Ovary (tissue), 10 donors: ENCODE measurements at regions of chr20 and their contacts with region 1.

Region 1: GRCh38 chr20:4014031-4014474 is 1.3 kb downstream of the RNF24 start:
- DNase-seq: peak in 2 of 5 donors; percentile 21 to 42
- H3K4me3 ChIP-seq: no peak overlapping the region
- H3K27ac ChIP-seq: peak overlapping the region in 1 of 2 donors; percentile 30
- H3K4me1 ChIP-seq: peaks cover 2% of the 10 kb centered on the region
- H3K27me3 ChIP-seq: no peaks in the 10 kb centered on the region
- CTCF ChIP-seq: peak in 2 of 3 donors; percentile 27 to 43
- EP300 ChIP-seq: no peak
- POLR2A ChIP-seq: no peak

Region 2: GRCh38 chr20:3888622-3889488 is 125.2 kb before region 1 on chr20 and contains the start of gene PANK2:
- intact Hi-C with region 1: loop called in 1 of 4 experiments (anchors 1 kb)
- DNase-seq: peak; percentile 99 to 100 (median 99)
- H3K4me3 ChIP-seq: peak within 1 kb of the TSS; percentile 93
- H3K27ac ChIP-seq: peak within 1 kb of the TSS; percentile 86 to 92
- H3K4me1 ChIP-seq: peaks cover 13% of the 10 kb centered on the region
- H3K27me3 ChIP-seq: no peaks in the 10 kb centered on the region
- CTCF ChIP-seq: peak; percentile 23 to 54 (median 44)
- EP300 ChIP-seq: no peak
- POLR2A ChIP-seq: peak; percentile 95
- total RNA-seq, gene PANK2: 22.2 to 34.9 (median 33.9) TPM

Region 3: DNA sequence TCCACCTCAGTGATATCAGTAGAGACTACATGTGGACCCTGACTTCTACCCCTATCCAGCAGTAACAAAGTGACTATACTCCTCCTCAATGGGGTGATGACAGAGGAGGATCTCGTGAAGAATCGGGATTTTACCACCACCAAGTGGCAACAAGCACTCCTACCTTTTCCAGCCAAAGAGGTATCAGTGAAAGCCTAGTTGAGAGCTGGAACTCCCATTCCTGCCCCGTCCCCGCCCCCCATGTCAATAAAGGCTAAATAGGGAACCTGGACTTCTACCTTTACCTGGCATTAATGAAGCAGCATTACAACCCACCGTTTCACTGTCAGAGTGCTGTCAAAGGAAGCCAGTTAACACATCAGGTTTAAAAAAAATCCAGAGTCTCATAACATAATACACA is 44.0 kb before region 1 on chr20:
- intact Hi-C with region 1: no loop called
- DNase-seq: no peak
- H3K4me3 ChIP-seq: no peak overlapping the region
- H3K27ac ChIP-seq: no peak overlapping the region
- H3K4me1 ChIP-seq: no peaks in the 10 kb centered on the region
- H3K27me3 ChIP-seq: no peaks in the 10 kb centered on the region
- CTCF ChIP-seq: no peak
- EP300 ChIP-seq: no peak
- POLR2A ChIP-seq: no peak

Region 4: DNA sequence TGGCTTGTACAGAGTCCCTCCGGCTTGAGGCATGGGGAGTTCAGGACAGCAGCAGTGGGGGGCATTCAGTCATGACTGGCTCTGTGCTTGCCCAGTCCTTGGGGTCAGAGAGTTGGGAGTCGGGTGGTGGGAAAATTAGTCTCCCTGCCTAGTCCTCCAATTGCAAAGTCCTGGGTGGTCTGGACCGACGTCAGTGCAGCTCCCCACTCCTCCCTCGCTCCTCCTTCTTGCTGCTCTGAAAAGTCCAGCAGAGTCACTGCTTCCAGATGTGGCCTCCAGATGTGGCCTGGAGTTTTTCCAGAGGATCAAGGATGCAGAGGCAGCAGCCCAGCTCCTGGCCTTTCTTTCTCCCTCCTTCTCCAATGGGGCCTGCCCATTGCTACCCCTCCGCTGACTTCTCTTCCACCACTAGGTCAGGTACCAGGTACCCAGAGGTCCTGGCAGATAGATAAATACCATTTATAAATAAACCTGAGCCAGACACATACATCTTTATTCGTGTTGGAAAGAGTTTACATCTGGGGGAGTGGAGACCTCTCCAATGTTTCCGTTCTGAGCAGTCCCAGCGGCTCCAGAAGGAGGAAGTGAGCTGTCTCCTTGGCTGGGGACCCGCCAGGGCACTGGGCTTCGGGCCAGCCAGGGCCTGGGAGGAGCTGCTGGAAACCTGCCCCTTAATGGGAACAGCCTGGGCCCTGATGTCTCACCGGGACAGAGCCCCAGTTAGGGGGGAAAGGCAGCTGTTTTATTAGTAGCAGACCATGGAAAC is 50.3 kb after region 1 on chr20:
- intact Hi-C with region 1: loop called in 1 of 4 experiments (anchors 10 kb)
- DNase-seq: peak; percentile 91 to 96 (median 94)
- H3K4me3 ChIP-seq: no peak overlapping the region
- H3K27ac ChIP-seq: peak overlapping the region; percentile 7 to 63
- H3K4me1 ChIP-seq: peaks cover 2% of the 10 kb centered on the region
- H3K27me3 ChIP-seq: no peaks in the 10 kb centered on the region
- CTCF ChIP-seq: no peak
- EP300 ChIP-seq: no peak
- POLR2A ChIP-seq: no peak

Region 5: DNA sequence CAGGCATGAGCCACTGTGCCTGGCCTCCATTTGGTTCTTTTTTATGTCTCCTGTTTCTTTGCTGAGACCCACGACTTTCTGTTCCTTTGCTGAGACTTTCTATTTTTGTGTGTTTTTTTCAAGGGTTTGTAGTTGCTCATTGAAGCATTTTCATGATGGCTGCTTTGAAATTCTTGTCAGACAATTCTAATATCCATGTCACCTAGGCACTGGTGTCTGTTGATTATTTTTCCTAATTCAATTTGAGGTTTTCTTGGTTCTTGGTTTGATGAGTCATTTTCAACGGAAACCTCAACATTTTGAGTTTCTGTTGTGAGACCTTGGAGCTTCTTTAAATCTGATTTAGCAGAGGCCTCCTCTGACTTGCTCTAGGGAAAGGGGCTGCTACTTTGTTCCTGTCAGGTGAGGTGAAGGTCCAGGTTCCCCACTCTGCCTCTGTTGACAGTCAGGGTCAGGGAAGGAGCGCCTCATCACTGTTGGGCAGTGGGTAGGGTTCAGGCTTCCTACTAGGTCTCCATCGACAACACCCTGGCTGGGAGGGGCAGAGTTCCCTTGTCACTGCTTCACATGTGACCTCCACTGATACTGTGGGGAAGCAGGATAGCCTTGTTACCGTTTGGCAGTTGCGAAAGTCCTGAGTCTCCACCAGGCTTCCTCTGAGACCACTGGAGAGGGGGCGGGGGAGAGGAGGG is 68.5 kb after region 1 on chr20:
- intact Hi-C with region 1: loop called in 3 of 4 experiments (anchors 5 to 10 kb)
- DNase-seq: peak in 1 of 5 donors; percentile 50
- H3K4me3 ChIP-seq: no peak overlapping the region
- H3K27ac ChIP-seq: no peak overlapping the region
- H3K4me1 ChIP-seq: peaks cover 6% of the 10 kb centered on the region
- H3K27me3 ChIP-seq: no peaks in the 10 kb centered on the region
- CTCF ChIP-seq: no peak
- EP300 ChIP-seq: no peak
- POLR2A ChIP-seq: no peak

Region 6: DNA sequence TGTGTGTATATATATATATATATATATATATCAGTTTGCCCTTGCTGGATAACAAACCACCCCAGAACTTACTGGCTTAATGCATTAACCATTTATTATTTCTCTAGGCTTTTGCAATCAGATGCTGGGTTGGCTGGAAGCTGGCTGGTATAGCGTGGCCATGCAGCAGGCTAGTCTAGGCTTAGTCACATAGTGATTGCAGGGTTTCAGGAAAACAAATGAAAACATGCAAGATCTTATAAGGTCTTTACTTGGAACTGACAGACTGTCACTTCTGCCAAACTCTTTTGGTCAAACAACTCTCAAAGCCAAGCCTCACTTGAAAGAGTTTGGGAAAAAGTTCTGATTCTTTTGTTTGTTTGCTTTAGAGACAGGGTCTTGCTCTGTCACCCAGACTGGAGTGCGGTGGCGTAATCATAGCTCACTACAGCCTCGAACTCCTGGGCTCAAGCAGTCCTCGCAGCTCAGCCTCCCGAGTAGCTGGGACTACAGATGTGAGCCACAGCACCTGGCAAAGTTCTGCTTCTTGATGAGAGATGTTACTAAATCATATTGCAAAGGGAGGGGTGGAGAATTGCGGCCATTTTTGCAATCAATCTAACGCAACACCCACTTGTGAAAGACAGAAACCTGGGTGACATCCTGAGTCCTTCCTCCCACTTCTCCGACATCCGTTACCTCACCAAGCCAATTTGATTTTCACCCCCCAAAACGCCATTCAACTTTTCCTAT is 75.9 kb after region 1 on chr20:
- intact Hi-C with region 1: loop called (anchors 2 to 10 kb)
- DNase-seq: no peak
- H3K4me3 ChIP-seq: no peak overlapping the region
- H3K27ac ChIP-seq: no peak overlapping the region
- H3K4me1 ChIP-seq: peaks cover 3% of the 10 kb centered on the region
- H3K27me3 ChIP-seq: no peaks in the 10 kb centered on the region
- CTCF ChIP-seq: no peak
- EP300 ChIP-seq: no peak
- POLR2A ChIP-seq: no peak

Region 7: DNA sequence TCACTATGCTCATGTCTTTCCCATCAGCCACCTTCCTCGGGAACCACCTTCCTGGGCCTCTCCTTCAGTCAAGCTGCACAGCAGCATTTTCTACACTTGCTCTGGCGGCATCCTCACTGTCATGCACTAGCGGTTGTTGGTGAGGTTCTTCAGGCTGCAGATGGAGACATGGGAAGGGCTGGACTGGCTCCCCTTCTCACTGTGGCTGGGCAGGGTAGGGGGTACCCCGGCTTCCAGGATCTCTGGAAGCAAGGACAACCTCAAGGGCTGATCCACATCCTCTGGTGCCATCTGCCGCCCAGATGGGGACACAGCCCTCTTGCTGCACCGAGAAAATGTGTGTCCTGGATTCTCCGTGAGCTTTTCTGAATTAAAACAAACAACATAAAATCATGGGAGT is 181.4 kb after region 1 on chr20:
- intact Hi-C with region 1: no loop called
- DNase-seq: no peak
- H3K4me3 ChIP-seq: no peak overlapping the region
- H3K27ac ChIP-seq: no peak overlapping the region
- H3K4me1 ChIP-seq: no peaks in the 10 kb centered on the region
- H3K27me3 ChIP-seq: no peaks in the 10 kb centered on the region
- CTCF ChIP-seq: no peak
- EP300 ChIP-seq: no peak
- POLR2A ChIP-seq: no peak